Activated CD4-positive, alpha-beta memory T cell treated with anti-CD3 and anti-CD28 coated beads for 36 hours (primary cell): ENCODE measurements at regions of chr6 and their contacts with region 1.

Region 1: DNA sequence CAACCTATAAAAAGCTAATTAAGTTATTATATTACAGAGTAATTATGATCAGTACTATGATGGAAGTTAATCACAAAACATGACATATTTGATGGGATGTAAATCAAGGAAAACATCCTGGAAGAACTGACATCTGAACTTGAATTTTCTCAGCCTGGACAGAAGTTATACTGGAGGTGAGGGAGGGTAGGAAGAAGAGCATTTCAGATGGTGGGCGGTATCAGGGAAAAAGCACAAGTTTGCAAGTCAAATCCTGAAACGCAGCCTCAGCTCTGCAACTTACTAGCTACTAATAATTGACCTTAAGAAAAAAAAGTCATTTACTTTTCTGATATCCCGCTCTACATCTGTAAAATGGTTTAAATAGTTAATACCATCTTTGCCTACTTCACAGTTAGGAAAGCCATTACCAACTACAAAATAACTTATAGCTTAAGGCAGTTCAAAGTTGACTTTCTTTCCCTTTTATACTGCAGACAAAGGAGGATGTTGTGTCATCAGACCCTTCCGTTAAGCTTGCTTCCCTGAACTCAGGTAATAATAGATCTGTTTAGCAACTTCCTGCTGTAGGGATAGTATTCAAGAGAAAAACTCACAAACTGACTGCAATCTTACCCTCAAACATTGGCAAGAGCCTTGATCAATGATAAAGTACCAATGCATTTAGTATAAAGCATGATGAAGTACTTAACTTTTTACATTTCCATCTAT is 21.0 kb downstream of the NOL7 start:
- DNase-seq: no peak
- H3K4me3 Mint-ChIP-seq: no peak overlapping the region
- H3K27ac Mint-ChIP-seq: peak overlapping the region; percentile 64
- H3K4me1 Mint-ChIP-seq: peaks cover 44% of the 10 kb centered on the region
- H3K27me3 Mint-ChIP-seq: no peaks in the 10 kb centered on the region

Region 2: DNA sequence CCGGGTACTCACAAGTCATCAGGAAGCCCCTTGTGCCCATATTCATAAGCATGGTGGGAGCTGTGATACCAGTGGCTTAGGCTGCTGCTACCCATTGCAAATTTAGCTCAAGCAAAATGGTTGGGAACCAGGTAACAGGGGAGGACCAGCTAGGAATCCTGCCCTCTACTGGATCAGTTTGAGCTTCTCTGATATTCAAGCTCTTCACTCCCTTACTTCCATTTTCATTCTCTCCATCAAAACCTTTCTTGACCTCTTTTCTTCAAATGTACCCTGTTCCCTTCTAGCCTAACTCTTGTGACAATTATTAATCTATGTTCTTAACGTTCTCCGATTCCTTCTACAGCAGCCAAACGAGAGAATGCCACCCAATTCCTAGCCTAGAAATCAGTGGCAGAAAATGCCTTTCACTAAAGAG is 11.2 kb before region 1 on chr6:
- CTCF ChIA-PET with region 1: interaction called, 10 read pairs
- POLR2A ChIA-PET with region 1: no interaction called
- intact Hi-C with region 1: no loop called
- DNase-seq: peak; percentile 25
- H3K4me3 Mint-ChIP-seq: no peak overlapping the region
- H3K27ac Mint-ChIP-seq: peak overlapping the region; percentile 40
- H3K4me1 Mint-ChIP-seq: peaks cover 20% of the 10 kb centered on the region
- H3K27me3 Mint-ChIP-seq: no peaks in the 10 kb centered on the region

Region 3: DNA sequence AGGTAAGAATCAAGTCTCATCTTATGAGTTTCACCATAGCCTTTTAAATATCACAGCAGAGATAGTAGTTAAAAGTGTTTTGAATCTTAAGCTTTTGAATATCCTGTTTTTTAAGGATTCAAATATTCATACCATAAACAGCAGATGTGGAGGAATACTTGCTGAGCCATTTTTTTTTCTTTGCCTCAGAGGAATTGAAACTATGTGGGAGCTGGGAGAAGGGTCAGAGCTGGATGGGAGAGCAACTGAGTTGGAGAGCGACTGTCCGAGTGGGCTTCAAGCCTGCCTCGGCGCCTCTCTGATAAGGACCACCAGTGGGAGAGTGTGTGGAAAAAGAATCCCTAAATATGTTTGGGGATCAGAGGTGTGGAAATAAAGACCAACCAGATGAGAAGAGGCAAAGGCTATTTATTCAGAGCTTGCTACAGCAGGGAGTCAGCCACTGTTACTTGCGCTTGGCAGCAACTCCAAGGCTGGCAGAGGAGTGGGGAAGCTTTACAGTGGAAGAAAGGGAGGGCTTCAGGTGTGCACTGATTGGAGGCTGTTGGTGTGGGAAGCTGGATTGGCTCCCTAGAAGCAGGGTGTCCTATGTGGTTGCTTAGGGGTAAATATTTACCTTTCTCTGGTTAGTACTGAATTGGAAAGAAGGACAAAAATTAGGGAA is 212.6 kb after region 1 on chr6:
- CTCF ChIA-PET with region 1: no interaction called
- POLR2A ChIA-PET with region 1: no interaction called
- intact Hi-C with region 1: no loop called
- DNase-seq: no peak
- H3K4me3 Mint-ChIP-seq: no peak overlapping the region
- H3K27ac Mint-ChIP-seq: no peak overlapping the region
- H3K4me1 Mint-ChIP-seq: no peaks in the 10 kb centered on the region
- H3K27me3 Mint-ChIP-seq: peaks cover 4% of the 10 kb centered on the region